ENCODE measurements at regions of chr3 and their contacts with region 1.

Region 1: GRCh38 chr3:128309026-128309425 is 155.7 kb downstream of the EEFSEC start:
- DNase-seq: no peak
- ATAC-seq: no peak
- H3K4me3 Mint-ChIP-seq: no peak overlapping the region
- H3K27ac Mint-ChIP-seq: no peak overlapping the region
- H3K4me1 Mint-ChIP-seq: peaks cover 16% of the 10 kb centered on the region
- H3K27me3 Mint-ChIP-seq: no peaks in the 10 kb centered on the region
- CTCF ChIP-seq: no peak

Region 2: GRCh38 chr3:128190501-128190900 is 118.5 kb before region 1 on chr3:
- CTCF ChIA-PET with region 1: no interaction called
- POLR2A ChIA-PET with region 1: no interaction called
- intact Hi-C with region 1: no loop called
- DNase-seq: no peak
- ATAC-seq: no peak
- H3K4me3 Mint-ChIP-seq: no peak overlapping the region
- H3K27ac Mint-ChIP-seq: no peak overlapping the region
- H3K4me1 Mint-ChIP-seq: peaks cover 5% of the 10 kb centered on the region
- H3K27me3 Mint-ChIP-seq: no peaks in the 10 kb centered on the region
- CTCF ChIP-seq: no peak

Region 3: DNA sequence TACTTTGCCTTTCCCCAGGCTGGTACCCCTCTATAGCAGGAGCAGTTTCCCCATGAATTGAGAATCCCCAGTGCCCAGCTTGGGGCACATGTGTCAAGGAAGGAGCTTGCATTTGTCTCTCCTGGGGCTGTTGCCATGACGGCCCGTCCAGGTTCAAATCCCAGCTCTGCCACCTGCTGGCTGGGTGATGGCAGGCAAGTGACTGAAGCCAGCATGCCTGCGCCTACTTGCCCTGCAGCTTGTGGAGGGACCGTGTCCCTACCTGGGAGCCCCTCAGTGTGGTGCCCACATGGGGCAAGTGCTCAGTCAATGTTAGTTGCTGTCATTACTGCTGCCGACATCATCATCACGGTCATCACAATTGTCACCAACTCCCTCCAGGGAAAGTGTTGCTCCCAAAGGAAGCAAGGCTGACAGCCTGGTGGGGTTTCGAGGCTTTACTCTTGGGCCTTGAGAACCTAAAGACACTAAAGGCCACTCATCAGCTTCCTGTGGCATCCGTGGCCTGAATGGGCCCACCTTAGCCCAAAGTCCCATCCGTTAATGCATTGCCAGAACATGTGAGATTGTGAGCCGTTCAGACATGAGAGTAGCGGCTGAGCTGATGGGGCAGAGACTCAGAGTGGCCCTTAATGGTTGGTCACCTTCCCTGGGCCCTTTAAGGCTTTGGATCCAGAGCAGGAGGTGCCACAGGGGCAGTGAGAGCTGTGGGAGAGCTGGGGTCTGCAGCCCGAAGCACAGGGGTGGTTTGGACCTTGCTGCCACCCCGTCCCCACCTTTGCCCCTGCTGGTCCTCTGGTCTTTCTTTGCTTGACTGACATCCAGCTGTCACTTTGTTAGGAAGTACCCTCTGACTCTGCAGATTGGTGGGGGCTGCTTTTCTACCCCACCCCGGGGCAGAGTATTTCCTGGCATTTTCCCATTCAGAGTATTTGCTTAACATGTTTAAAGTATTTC is 13.3 kb after region 1 on chr3:
- CTCF ChIA-PET with region 1: interaction called, 12 read pairs
- POLR2A ChIA-PET with region 1: no interaction called
- intact Hi-C with region 1: no loop called
- DNase-seq: peak; percentile 71
- ATAC-seq: peak; percentile 69
- H3K4me3 Mint-ChIP-seq: no peak overlapping the region
- H3K27ac Mint-ChIP-seq: no peak overlapping the region
- H3K4me1 Mint-ChIP-seq: peaks cover 36% of the 10 kb centered on the region
- H3K27me3 Mint-ChIP-seq: no peaks in the 10 kb centered on the region
- CTCF ChIP-seq: peak; percentile 55

Region 4: DNA sequence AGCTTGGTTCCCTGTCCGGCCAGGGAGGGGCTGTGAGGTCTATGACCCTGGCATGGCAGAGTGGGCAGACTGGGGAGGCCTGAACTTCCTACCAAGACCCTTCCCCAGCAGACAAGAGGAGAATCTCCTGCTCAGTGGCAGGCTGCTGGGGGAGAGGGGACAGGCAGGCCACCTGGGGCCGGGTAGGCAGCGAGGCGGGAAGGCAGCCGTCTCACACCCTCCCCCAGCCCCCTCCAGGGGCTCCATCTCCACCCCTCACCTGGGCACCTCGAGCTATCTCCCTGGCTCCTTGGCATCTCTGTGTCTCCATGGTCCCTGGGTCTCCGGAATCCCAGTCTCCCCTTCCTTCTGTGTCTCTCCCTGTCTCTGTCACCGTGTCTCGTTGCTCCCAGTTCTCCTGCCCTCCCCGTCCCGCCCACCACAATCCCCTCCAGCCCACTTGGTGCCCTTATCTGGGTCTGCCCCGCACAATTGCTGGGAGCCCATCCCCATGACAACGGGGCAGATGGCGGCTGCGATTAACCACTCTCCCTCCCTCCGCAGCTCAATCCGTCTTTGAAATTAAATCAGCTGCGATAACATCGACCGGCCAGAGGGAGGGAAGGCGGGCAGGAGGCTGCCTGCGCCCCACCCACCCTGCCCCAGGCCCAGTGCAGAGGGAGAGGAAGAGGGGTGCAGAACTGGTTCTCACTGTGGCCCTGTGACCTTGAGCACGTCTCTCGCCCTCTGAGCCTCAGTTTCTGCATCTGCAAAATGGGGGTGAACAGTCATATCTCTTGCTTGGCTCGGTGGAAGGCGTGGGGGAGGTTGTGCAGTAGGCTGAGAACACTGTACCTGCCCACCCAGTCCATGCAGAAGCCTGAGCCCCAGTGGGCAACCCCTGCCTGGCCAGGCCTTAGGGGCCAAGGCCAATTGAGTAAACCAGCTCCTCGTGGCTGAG is 148.0 kb after region 1 on chr3:
- CTCF ChIA-PET with region 1: no interaction called
- POLR2A ChIA-PET with region 1: no interaction called
- intact Hi-C with region 1: no loop called
- DNase-seq: no peak
- ATAC-seq: no peak
- H3K4me3 Mint-ChIP-seq: no peak overlapping the region
- H3K27ac Mint-ChIP-seq: no peak overlapping the region
- H3K4me1 Mint-ChIP-seq: no peaks in the 10 kb centered on the region
- H3K27me3 Mint-ChIP-seq: peaks cover 15% of the 10 kb centered on the region
- CTCF ChIP-seq: no peak